B cell (primary cell): ENCODE measurements at regions of chr20 and their contacts with region 1.

Region 1: GRCh38 chr20:47411161-47411560 is 54.7 kb upstream of the ZMYND8 start:
- DNase-seq: no peak
- ATAC-seq: no peak
- H3K4me3 ChIP-seq: peak overlapping the region in 4 of 5 experiments; percentile 30 to 56 (median 48)
- H3K4me3 Mint-ChIP-seq: peak overlapping the region; percentile 91
- H3K27ac ChIP-seq: peak overlapping the region; percentile 97 to 99
- H3K27ac Mint-ChIP-seq: peak overlapping the region; percentile 93
- H3K4me1 ChIP-seq: peaks cover 79 to 90% of the 10 kb centered on the region in 2 donors
- H3K4me1 Mint-ChIP-seq: peaks cover 76% of the 10 kb centered on the region
- H3K27me3 ChIP-seq: no peaks in the 10 kb centered on the region
- H3K27me3 Mint-ChIP-seq: no peaks in the 10 kb centered on the region
- CTCF ChIP-seq: no peak

Region 2: DNA sequence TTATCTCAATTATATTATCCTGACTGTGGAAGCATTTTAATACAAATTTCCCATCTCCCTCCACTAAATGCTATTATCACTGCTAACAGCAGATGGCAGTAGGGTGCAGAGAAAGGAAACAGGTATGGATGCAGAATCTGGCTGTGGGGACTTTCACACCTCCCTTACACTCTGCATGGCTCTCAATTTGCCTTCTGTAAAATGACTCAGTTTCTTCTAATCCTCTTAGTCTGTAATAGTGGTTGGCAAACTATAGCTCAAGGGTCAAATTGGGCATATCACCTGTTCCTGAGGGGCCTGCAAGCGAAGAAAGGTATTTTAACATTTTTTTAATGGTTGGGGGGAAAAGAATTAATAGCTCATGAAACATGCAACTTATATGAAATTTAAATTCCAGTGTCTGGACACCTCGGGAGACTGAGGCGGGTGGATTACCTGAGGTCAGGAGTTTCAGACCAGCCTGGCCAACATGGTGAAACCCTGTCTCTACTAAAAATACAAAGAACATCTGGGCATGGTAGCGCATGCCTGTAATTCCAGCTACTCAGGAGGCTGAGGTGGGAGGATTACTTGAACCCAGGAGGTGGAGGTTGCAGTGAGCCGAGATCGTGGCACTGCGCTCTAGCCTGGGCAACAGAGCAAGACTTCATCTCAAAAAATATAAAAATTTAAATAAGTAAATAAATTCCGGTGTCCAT is 138.1 kb before region 1 on chr20:
- CTCF ChIA-PET with region 1: interaction called, 21 read pairs
- POLR2A ChIA-PET with region 1: interaction called, 4 read pairs
- intact Hi-C with region 1: no loop called
- DNase-seq: peak; percentile 79
- ATAC-seq: peak; percentile 86
- H3K4me3 ChIP-seq: no peak overlapping the region
- H3K4me3 Mint-ChIP-seq: no peak overlapping the region
- H3K27ac ChIP-seq: no peak overlapping the region
- H3K27ac Mint-ChIP-seq: peak overlapping the region; percentile 74
- H3K4me1 ChIP-seq: peaks cover 0 to 5% of the 10 kb centered on the region in 2 donors
- H3K4me1 Mint-ChIP-seq: peaks cover 25% of the 10 kb centered on the region
- H3K27me3 ChIP-seq: no peaks in the 10 kb centered on the region
- H3K27me3 Mint-ChIP-seq: no peaks in the 10 kb centered on the region
- CTCF ChIP-seq: peak; percentile 95

Region 3: DNA sequence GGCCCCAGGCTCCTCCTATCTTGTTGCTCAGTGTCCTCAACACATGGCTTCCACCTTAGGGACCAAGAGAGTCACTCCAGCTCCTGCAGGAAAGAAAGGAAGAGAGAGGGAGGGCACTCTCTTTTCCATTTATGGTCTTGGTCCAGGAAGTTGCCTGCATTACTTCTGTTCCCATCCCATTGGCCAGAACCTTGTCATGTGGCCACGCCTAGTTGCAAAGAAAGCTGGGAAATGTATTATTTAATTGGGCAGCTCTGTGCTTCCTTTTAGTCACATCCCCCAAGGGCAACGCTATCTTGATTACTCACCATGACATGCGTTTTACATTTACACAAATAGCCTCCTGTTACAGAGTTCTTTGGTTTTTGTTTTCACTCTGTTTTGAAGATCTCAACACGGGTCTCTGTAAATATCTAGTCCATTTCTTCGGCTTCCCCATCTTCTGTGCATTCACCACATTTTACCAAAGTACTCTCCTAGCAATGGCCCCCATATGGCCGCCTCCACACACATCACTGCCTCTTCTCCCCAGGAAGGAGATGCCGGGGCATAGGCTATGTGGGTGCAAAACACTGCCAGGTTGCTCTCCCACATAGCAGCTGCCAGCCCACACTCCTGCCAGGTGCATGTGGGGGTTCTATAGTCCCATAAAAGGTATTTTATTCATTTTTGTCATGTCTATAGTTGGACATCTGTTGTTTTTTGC is 19.0 kb before region 1 on chr20:
- CTCF ChIA-PET with region 1: interaction called, 15 read pairs
- POLR2A ChIA-PET with region 1: interaction called, 17 read pairs
- intact Hi-C with region 1: loop called (anchors 1 kb)
- DNase-seq: peak; percentile 54
- ATAC-seq: peak; percentile 71
- H3K4me3 ChIP-seq: no peak overlapping the region
- H3K4me3 Mint-ChIP-seq: peak overlapping the region; percentile 57
- H3K27ac ChIP-seq: peak overlapping the region; percentile 46 to 52
- H3K27ac Mint-ChIP-seq: peak overlapping the region; percentile 83
- H3K4me1 ChIP-seq: peaks cover 28 to 34% of the 10 kb centered on the region in 2 donors
- H3K4me1 Mint-ChIP-seq: peaks cover 37% of the 10 kb centered on the region
- H3K27me3 ChIP-seq: no peaks in the 10 kb centered on the region
- H3K27me3 Mint-ChIP-seq: no peaks in the 10 kb centered on the region
- CTCF ChIP-seq: no peak

Region 4: DNA sequence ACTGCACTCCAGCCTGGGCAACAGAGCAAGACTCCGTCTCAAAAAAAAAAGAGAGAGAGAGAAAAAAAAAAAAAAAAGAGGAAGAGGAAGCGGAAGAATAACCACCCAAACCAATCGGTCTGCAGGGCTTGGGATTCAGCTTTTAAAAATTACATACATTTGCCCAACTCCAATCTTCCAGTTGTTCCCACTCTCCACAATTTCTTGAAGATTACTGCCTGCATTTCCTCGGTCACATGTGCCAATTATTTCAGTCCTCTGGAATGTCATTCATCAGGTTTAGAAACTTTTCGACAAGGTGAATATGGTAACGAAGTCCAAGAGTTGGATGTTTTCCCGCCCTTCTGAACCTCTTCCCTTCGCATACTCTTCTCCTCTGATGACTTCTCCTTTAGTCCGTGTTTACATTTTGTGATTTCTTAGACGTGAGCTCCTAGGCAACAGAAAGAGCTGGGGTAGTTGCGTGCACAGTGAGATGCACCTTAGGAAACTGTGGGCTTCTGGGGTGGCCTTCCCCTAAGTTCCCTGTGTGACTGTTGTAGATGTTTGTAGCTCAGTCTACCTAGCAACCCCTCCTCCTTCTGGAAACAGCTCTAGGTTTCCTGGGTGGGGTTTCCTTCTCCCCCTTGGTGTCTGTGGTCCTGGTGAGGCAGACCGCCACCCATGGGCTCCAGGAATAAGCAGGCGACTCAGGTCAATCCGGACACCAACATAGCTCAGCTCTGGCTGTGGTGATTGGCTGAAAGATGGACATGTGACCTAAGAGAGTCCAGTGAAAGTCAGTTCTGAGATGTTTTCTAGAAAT is 27.6 kb after region 1 on chr20:
- CTCF ChIA-PET with region 1: interaction called, 34 read pairs
- POLR2A ChIA-PET with region 1: interaction called, 114 read pairs
- intact Hi-C with region 1: loop called (anchors 1 kb)
- DNase-seq: peak; percentile 87
- ATAC-seq: peak; percentile 70
- H3K4me3 ChIP-seq: peak overlapping the region in 1 of 5 experiments; percentile 11
- H3K4me3 Mint-ChIP-seq: peak overlapping the region; percentile 61
- H3K27ac ChIP-seq: peak overlapping the region; percentile 87 to 88
- H3K27ac Mint-ChIP-seq: peak overlapping the region; percentile 90
- H3K4me1 ChIP-seq: peaks cover 41 to 56% of the 10 kb centered on the region in 2 donors
- H3K4me1 Mint-ChIP-seq: peaks cover 48% of the 10 kb centered on the region
- H3K27me3 ChIP-seq: no peaks in the 10 kb centered on the region
- H3K27me3 Mint-ChIP-seq: no peaks in the 10 kb centered on the region
- CTCF ChIP-seq: no peak

Region 5: GRCh38 chr20:47461120-47461685 is 50.0 kb after region 1 on chr20:
- CTCF ChIA-PET with region 1: no interaction called
- POLR2A ChIA-PET with region 1: no interaction called
- intact Hi-C with region 1: no loop called
- DNase-seq: no peak
- ATAC-seq: no peak
- H3K4me3 ChIP-seq: no peak overlapping the region
- H3K4me3 Mint-ChIP-seq: no peak overlapping the region
- H3K27ac ChIP-seq: no peak overlapping the region
- H3K27ac Mint-ChIP-seq: peak overlapping the region; percentile 50
- H3K4me1 ChIP-seq: no peaks in the 10 kb centered on the region
- H3K4me1 Mint-ChIP-seq: peaks cover 6% of the 10 kb centered on the region
- H3K27me3 ChIP-seq: no peaks in the 10 kb centered on the region
- H3K27me3 Mint-ChIP-seq: no peaks in the 10 kb centered on the region
- CTCF ChIP-seq: no peak

Region 6: DNA sequence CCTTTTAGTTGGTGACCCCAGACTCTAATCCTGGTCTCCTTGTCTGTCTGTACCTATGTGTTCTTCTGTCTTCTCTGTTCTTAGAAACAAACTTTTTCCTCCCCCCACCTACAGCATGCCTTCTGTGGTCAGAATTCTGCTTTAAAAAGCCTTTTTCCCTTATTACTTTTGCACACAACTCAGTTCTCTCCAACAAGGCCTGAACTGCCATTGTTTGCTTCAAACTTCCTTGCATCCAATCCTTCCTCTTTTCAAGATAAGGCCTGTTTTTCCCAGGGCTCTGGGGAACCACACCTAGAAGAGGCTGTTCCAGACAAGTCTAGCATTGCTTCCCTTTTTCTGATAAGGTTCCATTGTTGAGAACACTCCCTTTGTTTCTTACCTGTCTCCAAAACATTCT is 68.3 kb after region 1 on chr20:
- CTCF ChIA-PET with region 1: interaction called, 9 read pairs
- POLR2A ChIA-PET with region 1: interaction called, 33 read pairs
- intact Hi-C with region 1: no loop called
- DNase-seq: no peak
- ATAC-seq: no peak
- H3K4me3 ChIP-seq: no peak overlapping the region
- H3K4me3 Mint-ChIP-seq: no peak overlapping the region
- H3K27ac ChIP-seq: peak overlapping the region in 1 of 2 donors; percentile 13
- H3K27ac Mint-ChIP-seq: peak overlapping the region; percentile 75
- H3K4me1 ChIP-seq: peaks cover 10 to 21% of the 10 kb centered on the region in 2 donors
- H3K4me1 Mint-ChIP-seq: peaks cover 42% of the 10 kb centered on the region
- H3K27me3 ChIP-seq: no peaks in the 10 kb centered on the region
- H3K27me3 Mint-ChIP-seq: no peaks in the 10 kb centered on the region
- CTCF ChIP-seq: no peak

Region 7: DNA sequence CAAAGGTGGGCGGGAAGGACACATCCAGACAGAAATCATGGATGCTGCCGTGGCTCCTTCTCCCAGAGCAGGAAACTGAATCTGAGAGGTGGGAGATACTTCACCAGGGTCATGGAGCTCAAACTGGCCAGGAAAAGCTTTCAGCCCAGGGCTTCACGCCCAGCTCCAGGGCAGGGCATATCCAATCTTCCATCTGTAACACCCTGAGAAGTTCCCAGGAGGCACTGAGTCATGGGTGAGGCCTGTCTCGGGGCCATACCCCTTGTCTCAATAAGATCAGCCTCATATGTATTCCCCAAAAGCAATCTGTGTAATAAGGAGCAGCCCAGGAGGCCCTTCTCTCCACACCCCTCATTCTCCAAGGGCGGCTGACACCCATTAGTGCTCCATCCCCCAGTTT is 813.4 kb after region 1 on chr20:
- CTCF ChIA-PET with region 1: no interaction called
- POLR2A ChIA-PET with region 1: no interaction called
- intact Hi-C with region 1: no loop called
- DNase-seq: no peak
- ATAC-seq: no peak
- H3K4me3 ChIP-seq: no peak overlapping the region
- H3K4me3 Mint-ChIP-seq: no peak overlapping the region
- H3K27ac ChIP-seq: no peak overlapping the region
- H3K27ac Mint-ChIP-seq: no peak overlapping the region
- H3K4me1 ChIP-seq: no peaks in the 10 kb centered on the region
- H3K4me1 Mint-ChIP-seq: no peaks in the 10 kb centered on the region
- H3K27me3 ChIP-seq: peaks cover 0 to 6% (median 0%) of the 10 kb centered on the region in 4 experiments
- H3K27me3 Mint-ChIP-seq: peaks cover 11% of the 10 kb centered on the region
- CTCF ChIP-seq: no peak